Activated CD8-positive, alpha-beta T cell treated with anti-CD3 and anti-CD28 coated beads for 36 hours (primary cell): ENCODE measurements at regions of chr7 and their contacts with region 1.

Region 1: GRCh38 chr7:37181550-37181932 is 267.1 kb downstream of the ELMO1 start:
- DNase-seq: no peak
- ATAC-seq: no peak
- H3K4me3 Mint-ChIP-seq: no peak overlapping the region
- H3K27ac Mint-ChIP-seq: no peak overlapping the region
- H3K4me1 Mint-ChIP-seq: peaks cover 7% of the 10 kb centered on the region
- H3K27me3 Mint-ChIP-seq: no peaks in the 10 kb centered on the region
- CTCF ChIP-seq: no peak

Region 2: DNA sequence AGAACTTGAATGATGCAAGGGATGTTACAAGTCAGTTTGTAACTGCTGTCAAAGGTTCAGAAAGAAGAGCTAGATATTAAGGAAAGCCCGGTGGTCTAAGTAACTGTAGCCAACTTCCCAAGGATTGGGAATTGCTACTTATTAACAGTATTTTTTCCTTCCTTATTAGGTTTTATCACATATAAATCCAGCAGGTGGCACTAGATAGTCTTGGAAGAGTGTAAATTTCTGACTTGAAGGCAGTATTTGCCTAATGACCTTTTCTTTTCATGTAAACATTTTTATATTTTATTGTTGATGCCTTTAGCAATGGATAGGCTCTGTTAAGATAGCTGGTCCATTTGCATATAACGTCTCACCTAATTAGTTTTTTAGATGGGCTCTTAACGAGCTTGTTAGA is 740.7 kb before region 1 on chr7:
- CTCF ChIA-PET with region 1: interaction called, 14 read pairs
- POLR2A ChIA-PET with region 1: no interaction called
- intact Hi-C with region 1: no loop called
- DNase-seq: no peak
- ATAC-seq: no peak
- H3K4me3 Mint-ChIP-seq: no peak overlapping the region
- H3K27ac Mint-ChIP-seq: no peak overlapping the region
- H3K4me1 Mint-ChIP-seq: no peaks in the 10 kb centered on the region
- H3K27me3 Mint-ChIP-seq: no peaks in the 10 kb centered on the region
- CTCF ChIP-seq: peak; percentile 49

Region 3: GRCh38 chr7:36670585-36671431 is 510.7 kb before region 1 on chr7:
- CTCF ChIA-PET with region 1: interaction called, 17 read pairs
- POLR2A ChIA-PET with region 1: no interaction called
- intact Hi-C with region 1: no loop called
- DNase-seq: peak; percentile 78
- ATAC-seq: peak; percentile 78
- H3K4me3 Mint-ChIP-seq: no peak overlapping the region
- H3K27ac Mint-ChIP-seq: peak overlapping the region; percentile 82
- H3K4me1 Mint-ChIP-seq: peaks cover 67% of the 10 kb centered on the region
- H3K27me3 Mint-ChIP-seq: no peaks in the 10 kb centered on the region
- CTCF ChIP-seq: peak; percentile 87

Region 4: GRCh38 chr7:36683695-36684357 is 497.7 kb before region 1 on chr7:
- CTCF ChIA-PET with region 1: interaction called, 21 read pairs
- POLR2A ChIA-PET with region 1: no interaction called
- intact Hi-C with region 1: no loop called
- DNase-seq: peak; percentile 33
- ATAC-seq: peak; percentile 75
- H3K4me3 Mint-ChIP-seq: no peak overlapping the region
- H3K27ac Mint-ChIP-seq: peak overlapping the region; percentile 90
- H3K4me1 Mint-ChIP-seq: peaks cover 76% of the 10 kb centered on the region
- H3K27me3 Mint-ChIP-seq: no peaks in the 10 kb centered on the region
- CTCF ChIP-seq: no peak

Region 5: GRCh38 chr7:37007268-37007667 is 174.3 kb before region 1 on chr7:
- CTCF ChIA-PET with region 1: interaction called, 11 read pairs
- POLR2A ChIA-PET with region 1: no interaction called
- intact Hi-C with region 1: no loop called
- DNase-seq: no peak
- ATAC-seq: no peak
- H3K4me3 Mint-ChIP-seq: no peak overlapping the region
- H3K27ac Mint-ChIP-seq: no peak overlapping the region
- H3K4me1 Mint-ChIP-seq: no peaks in the 10 kb centered on the region
- H3K27me3 Mint-ChIP-seq: no peaks in the 10 kb centered on the region
- CTCF ChIP-seq: no peak

Region 6: GRCh38 chr7:37201003-37201875 is 19.7 kb after region 1 on chr7:
- CTCF ChIA-PET with region 1: interaction called, 33 read pairs
- POLR2A ChIA-PET with region 1: no interaction called
- intact Hi-C with region 1: no loop called
- DNase-seq: peak; percentile 67
- ATAC-seq: peak; percentile 62
- H3K4me3 Mint-ChIP-seq: no peak overlapping the region
- H3K27ac Mint-ChIP-seq: peak overlapping the region; percentile 8
- H3K4me1 Mint-ChIP-seq: peaks cover 10% of the 10 kb centered on the region
- H3K27me3 Mint-ChIP-seq: no peaks in the 10 kb centered on the region
- CTCF ChIP-seq: peak; percentile 63